ENCODE measurements at regions of chr10 and their contacts with region 1.

Region 1: GRCh38 chr10:77641788-77642397 is 4.3 kb upstream of the KCNMA1 start:
- DNase-seq: peak; percentile 27
- H3K4me3 ChIP-seq: no peak overlapping the region
- H3K27me3 ChIP-seq: no peaks in the 10 kb centered on the region; the same call in 1 of the 2 replicates
- CTCF ChIP-seq: peak; percentile 67

Region 2: DNA sequence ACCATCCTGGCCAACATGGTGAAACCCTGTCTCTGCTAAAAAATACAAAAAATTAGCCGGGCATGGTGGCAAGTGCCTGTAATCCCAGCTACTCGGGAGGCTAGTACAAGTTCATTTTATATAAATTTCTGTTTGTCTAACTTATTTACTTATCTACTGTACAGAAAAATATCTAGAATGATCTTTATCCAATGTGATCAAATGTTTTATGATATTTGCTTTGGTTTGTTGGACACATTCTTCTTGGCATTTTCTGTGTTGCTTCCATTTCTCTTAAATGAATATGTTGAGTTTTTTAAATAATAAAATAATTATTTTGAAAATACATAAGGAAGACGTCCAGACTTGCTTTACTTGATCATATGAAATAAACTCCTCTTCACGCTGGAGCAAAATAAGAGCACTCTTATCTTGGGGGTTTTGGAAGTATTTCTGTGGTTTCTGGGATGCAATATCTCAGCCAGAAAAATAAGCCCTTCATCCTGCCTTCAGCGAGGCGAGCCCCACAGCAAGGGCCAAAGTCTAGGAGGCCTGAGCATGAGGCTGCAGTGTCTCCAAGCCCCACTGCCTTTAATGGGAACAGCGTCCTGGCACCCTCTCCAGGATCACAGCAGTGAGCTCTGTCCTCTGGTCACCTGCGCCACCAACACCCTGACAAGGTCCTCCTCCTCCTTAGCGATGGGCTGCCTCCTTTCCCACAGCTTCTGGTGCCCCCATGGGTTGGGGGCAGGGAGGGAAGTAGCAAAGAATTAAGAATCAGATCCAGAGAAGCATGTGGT is 484.5 kb before region 1 on chr10:
- CTCF ChIA-PET with region 1: interaction called, 13 read pairs
- POLR2A ChIA-PET with region 1: no interaction called
- DNase-seq: no peak
- H3K4me3 ChIP-seq: no peak overlapping the region
- H3K27me3 ChIP-seq: no peaks in the 10 kb centered on the region
- CTCF ChIP-seq: no peak

Region 3: GRCh38 chr10:77165445-77166208 is 476.3 kb before region 1 on chr10:
- CTCF ChIA-PET with region 1: interaction called, 374 read pairs
- POLR2A ChIA-PET with region 1: no interaction called
- DNase-seq: no peak
- H3K4me3 ChIP-seq: no peak overlapping the region
- H3K27me3 ChIP-seq: no peaks in the 10 kb centered on the region
- CTCF ChIP-seq: peak; percentile 77

Region 4: DNA sequence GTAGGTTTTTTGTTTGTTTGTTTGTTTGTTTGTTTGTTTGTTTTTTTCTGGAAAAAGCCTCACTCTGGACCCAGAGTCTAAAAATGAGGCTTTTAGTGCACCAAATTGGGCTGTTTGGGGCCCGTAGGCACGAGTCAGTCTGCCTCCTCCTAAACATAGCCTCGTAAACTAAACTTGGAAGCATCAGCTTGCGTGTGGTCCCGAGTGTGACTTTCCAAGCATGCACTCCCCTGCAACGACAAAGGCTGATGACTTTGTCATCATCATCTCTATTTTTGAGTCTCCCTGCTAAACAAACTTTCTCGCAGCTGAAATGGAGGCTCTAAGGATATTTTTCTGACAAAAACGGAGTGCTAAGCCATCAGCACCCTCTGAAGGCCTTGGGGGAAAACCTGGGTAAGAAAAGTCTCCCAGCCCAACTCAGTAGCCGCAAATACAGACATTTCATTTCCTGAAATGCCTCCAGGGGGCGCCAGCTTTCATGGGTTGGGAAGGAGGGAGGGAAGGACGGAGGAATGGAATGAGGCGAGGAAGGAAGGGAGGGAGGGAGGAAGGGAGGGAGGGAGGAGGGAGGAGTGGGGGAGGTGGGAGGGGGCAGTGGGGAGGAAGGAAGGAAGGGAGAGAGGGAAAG is 250.2 kb before region 1 on chr10:
- CTCF ChIA-PET with region 1: interaction called, 69 read pairs
- POLR2A ChIA-PET with region 1: no interaction called
- DNase-seq: peak; percentile 51
- H3K4me3 ChIP-seq: no peak overlapping the region
- H3K27me3 ChIP-seq: no peaks in the 10 kb centered on the region
- CTCF ChIP-seq: peak; percentile 80

Region 5: DNA sequence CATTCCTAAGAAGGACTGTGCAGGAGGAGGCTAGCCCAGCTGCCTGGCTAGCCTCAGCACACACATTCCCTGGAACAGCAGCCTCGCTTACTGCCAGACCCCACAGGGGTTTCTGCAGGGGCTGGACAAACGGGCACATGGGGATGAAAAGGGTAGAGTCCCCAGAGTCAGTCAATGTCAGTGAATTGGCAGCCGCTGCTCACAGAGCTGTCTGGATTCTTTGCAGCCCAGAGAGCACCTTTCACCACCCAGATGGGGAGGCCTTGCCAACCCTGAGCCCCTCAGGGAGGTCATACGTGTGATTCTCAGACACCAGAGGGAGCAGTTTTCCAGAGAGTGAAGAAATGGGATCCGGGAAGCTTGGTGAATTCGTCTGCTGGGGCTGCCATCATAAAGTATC is 147.6 kb before region 1 on chr10:
- CTCF ChIA-PET with region 1: interaction called, 11 read pairs
- POLR2A ChIA-PET with region 1: no interaction called
- DNase-seq: no peak
- H3K4me3 ChIP-seq: no peak overlapping the region
- H3K27me3 ChIP-seq: no peaks in the 10 kb centered on the region
- CTCF ChIP-seq: peak; percentile 45

Region 6: GRCh38 chr10:77504873-77505257 is 137.0 kb before region 1 on chr10:
- CTCF ChIA-PET with region 1: interaction called, 13 read pairs
- POLR2A ChIA-PET with region 1: no interaction called
- DNase-seq: no peak
- H3K4me3 ChIP-seq: no peak overlapping the region
- H3K27me3 ChIP-seq: no peaks in the 10 kb centered on the region
- CTCF ChIP-seq: no peak